T-cell (primary cell): ENCODE measurements at regions of chr6 and their contacts with region 1.

Region 1: DNA sequence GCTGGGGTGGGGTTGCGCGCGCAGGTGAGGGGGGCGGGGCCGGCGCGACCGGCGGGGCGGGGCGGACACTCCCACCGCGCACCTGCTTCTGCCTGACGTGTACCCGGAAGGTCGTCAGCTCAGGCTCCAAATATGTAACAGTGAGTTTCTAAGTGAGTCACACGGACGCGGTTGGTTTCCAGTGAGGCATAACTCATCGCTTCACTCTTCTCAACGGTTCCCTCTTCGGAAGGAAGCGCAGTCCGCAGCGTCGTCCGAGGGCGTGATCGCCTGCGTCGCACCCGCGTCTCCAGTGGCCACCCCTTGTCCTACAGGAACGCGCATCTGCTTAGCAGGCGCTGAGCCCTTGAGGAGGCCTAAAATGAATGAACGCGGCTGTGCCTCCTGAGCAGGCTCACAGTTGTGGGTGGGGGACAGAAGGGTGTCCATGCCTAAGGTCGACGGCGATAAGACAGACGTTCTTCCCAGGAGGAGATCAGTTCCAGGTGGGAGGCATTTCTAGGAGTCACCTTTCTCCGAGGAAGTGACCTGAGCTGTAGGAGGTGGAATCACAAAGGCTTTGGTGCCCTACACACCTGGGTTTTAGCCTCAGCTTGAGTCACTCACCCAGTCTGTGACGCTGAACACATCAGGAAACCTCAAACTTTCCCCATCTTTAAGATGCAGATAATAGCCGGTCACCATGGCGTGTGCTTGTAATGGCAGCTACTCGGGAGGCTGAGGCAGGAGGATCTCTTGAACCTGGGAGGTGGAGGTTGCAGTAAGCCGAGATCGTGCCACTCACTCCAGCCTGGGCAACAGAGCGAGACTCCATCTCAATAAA is 50.9 kb upstream of the EZR start:
- DNase-seq: peak in 24 of 35 experiments; percentile 25 to 98 (median 94)
- ATAC-seq: peak; percentile 85 to 88 (median 88)
- H3K4me3 ChIP-seq: peak overlapping the region; percentile 44 to 79
- H3K4me3 Mint-ChIP-seq: peak overlapping the region; percentile 85 to 88 (median 85)
- H3K27ac ChIP-seq: peak overlapping the region; percentile 100
- H3K27ac Mint-ChIP-seq: peak overlapping the region; percentile 99
- H3K4me1 ChIP-seq: peaks cover 10 to 24% of the 10 kb centered on the region in 2 experiments
- H3K4me1 Mint-ChIP-seq: peaks cover 26 to 43% (median 28%) of the 10 kb centered on the region in 3 donors
- H3K27me3 ChIP-seq: no peaks in the 10 kb centered on the region
- H3K27me3 Mint-ChIP-seq: no peaks in the 10 kb centered on the region

Region 2: GRCh38 chr6:158631678-158632537 is 238.1 kb before region 1 on chr6:
- CTCF ChIA-PET with region 1: no interaction called
- POLR2A ChIA-PET with region 1: no interaction called
- DNase-seq: no peak
- ATAC-seq: no peak
- H3K4me3 ChIP-seq: no peak overlapping the region
- H3K4me3 Mint-ChIP-seq: no peak overlapping the region
- H3K27ac ChIP-seq: no peak overlapping the region
- H3K27ac Mint-ChIP-seq: peak overlapping the region; percentile 75 to 84
- H3K4me1 ChIP-seq: peaks cover 19 to 27% of the 10 kb centered on the region in 2 experiments
- H3K4me1 Mint-ChIP-seq: peaks cover 50 to 55% (median 52%) of the 10 kb centered on the region in 3 donors
- H3K27me3 ChIP-seq: no peaks in the 10 kb centered on the region
- H3K27me3 Mint-ChIP-seq: no peaks in the 10 kb centered on the region

Region 3: GRCh38 chr6:158793432-158793831 is 76.6 kb before region 1 on chr6:
- CTCF ChIA-PET with region 1: interaction called, 4 to 11 read pairs
- POLR2A ChIA-PET with region 1: interaction called, 3 to 24 read pairs
- DNase-seq: peak in 5 of 35 experiments; percentile 20 to 64 (median 34)
- ATAC-seq: peak in 3 of 4 experiments; percentile 18 to 44 (median 41)
- H3K4me3 ChIP-seq: no peak overlapping the region
- H3K4me3 Mint-ChIP-seq: no peak overlapping the region
- H3K27ac ChIP-seq: peak overlapping the region; percentile 6
- H3K27ac Mint-ChIP-seq: peak overlapping the region in 1 of 2 donors; percentile 84
- H3K4me1 ChIP-seq: peaks cover 17 to 74% of the 10 kb centered on the region in 2 experiments
- H3K4me1 Mint-ChIP-seq: peaks cover 85 to 92% (median 88%) of the 10 kb centered on the region in 3 donors
- H3K27me3 ChIP-seq: no peaks in the 10 kb centered on the region
- H3K27me3 Mint-ChIP-seq: no peaks in the 10 kb centered on the region

Region 4: DNA sequence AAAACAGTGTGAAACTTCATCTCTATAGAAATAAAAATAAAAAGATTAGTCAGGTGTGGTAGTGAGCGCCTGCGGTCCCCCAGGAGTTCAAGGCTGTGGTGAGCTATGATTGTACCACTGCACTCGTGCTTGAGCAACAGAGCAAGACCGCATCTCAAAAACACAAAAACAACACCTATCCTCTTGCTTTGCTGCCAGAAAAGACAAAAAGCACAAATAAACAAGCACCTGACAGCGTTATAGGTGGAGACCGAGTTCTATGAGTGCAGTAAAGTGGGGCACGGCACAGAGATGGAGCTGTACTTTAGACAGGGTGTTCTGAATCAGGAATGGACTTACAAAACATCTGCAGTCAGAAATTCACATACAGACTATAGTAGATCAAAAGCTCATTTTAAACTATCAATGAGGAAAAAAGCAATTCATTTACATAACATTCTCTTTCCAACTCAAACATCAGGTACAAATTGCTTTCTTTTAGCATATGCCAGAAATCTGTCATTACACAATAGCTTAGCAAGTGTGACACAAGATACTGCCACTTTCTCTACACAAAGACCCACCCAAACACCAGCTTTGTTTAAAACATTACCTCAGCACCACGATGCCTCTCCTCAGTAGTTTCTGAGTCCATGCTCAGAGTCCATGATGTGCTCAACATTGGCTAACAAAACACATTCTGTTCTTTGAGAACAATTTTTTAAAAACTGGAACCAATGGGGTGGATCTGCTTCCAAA is 60.9 kb before region 1 on chr6:
- CTCF ChIA-PET with region 1: interaction called, 4 to 14 read pairs
- POLR2A ChIA-PET with region 1: interaction called, 11 to 52 read pairs
- DNase-seq: peak in 28 of 35 experiments; percentile 17 to 75 (median 40)
- ATAC-seq: peak; percentile 36 to 82 (median 60)
- H3K4me3 ChIP-seq: no peak overlapping the region
- H3K4me3 Mint-ChIP-seq: peak overlapping the region; percentile 41 to 79 (median 58)
- H3K27ac ChIP-seq: peak overlapping the region; percentile 50
- H3K27ac Mint-ChIP-seq: peak overlapping the region; percentile 84 to 85
- H3K4me1 ChIP-seq: peaks cover 52 to 74% of the 10 kb centered on the region in 2 experiments
- H3K4me1 Mint-ChIP-seq: peaks cover 95 to 100% (median 98%) of the 10 kb centered on the region in 3 donors
- H3K27me3 ChIP-seq: no peaks in the 10 kb centered on the region
- H3K27me3 Mint-ChIP-seq: no peaks in the 10 kb centered on the region

Region 5: GRCh38 chr6:158826801-158827573 is 43.0 kb before region 1 on chr6:
- CTCF ChIA-PET with region 1: interaction called in 1 of 2 experiments, 3 read pairs
- POLR2A ChIA-PET with region 1: interaction called, 3 to 16 read pairs
- DNase-seq: no peak
- ATAC-seq: no peak
- H3K4me3 ChIP-seq: no peak overlapping the region
- H3K4me3 Mint-ChIP-seq: no peak overlapping the region
- H3K27ac ChIP-seq: no peak overlapping the region
- H3K27ac Mint-ChIP-seq: no peak overlapping the region
- H3K4me1 ChIP-seq: peaks cover 0 to 2% of the 10 kb centered on the region in 2 experiments
- H3K4me1 Mint-ChIP-seq: peaks cover 0 to 17% (median 4%) of the 10 kb centered on the region in 3 donors
- H3K27me3 ChIP-seq: no peaks in the 10 kb centered on the region
- H3K27me3 Mint-ChIP-seq: no peaks in the 10 kb centered on the region

Region 6: DNA sequence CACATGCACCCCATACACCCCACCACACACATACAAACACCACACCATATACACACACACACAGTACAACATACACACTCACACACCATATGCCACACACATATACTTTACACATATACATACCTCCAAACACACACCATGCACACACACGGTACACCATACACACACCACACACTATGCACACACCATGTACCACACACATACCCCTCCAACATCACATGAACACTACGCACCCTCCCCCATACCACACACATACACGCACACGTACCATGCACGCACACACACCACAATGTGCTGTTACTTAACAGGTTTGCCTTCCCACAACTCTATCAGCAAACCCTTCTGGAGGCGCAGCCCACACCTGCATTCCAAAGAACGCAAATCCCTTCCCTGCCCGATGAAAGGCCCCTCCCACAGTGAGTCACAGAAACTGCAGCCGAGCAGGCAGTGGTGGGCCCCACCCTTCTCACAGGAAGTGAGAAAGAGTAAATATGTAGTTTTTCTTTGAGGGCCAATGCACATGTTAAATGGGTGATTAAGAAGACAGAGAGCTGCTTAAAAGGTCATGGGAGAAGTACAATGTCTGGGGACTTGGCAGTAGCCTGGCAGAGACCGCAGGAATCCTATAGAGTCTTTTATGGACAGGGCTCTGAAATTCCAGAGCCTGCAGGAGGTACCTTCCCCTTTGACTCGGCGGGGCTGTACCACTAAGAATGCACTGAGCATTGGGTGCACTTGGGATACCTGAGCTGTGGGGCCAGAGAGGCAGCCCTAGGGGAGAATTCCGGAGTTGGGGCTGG is 16.8 kb before region 1 on chr6:
- CTCF ChIA-PET with region 1: interaction called, 4 to 20 read pairs
- POLR2A ChIA-PET with region 1: interaction called, 20 to 148 read pairs
- DNase-seq: peak; percentile 70 to 92 (median 84)
- ATAC-seq: peak; percentile 78 to 85 (median 80)
- H3K4me3 ChIP-seq: peak overlapping the region; percentile 10 to 52
- H3K4me3 Mint-ChIP-seq: no peak overlapping the region
- H3K27ac ChIP-seq: peak overlapping the region; percentile 98
- H3K27ac Mint-ChIP-seq: no peak overlapping the region
- H3K4me1 ChIP-seq: peaks cover 35 to 63% of the 10 kb centered on the region in 2 experiments
- H3K4me1 Mint-ChIP-seq: peaks cover 35 to 52% (median 49%) of the 10 kb centered on the region in 3 donors
- H3K27me3 ChIP-seq: no peaks in the 10 kb centered on the region
- H3K27me3 Mint-ChIP-seq: no peaks in the 10 kb centered on the region